ENCODE measurements at regions of chr14 and their contacts with region 1.

Region 1: GRCh38 chr14:37709419-37710195 is 114.2 kb downstream of the TTC6 start:
- DNase-seq: no peak
- H3K4me3 ChIP-seq: no peak overlapping the region
- H3K27ac ChIP-seq: no peak overlapping the region
- H3K4me1 ChIP-seq: no peaks in the 10 kb centered on the region
- H3K27me3 ChIP-seq: no peaks in the 10 kb centered on the region
- CTCF ChIP-seq: peak in 2 of 3 experiments; percentile 30 to 33; a peak in 2 of 4 replicates
- EP300 ChIP-seq: no peak
- POLR2A ChIP-seq: no peak
- RAD21 ChIP-seq: peak; percentile 62 to 74

Region 2: GRCh38 chr14:37428946-37429345 is 280.7 kb before region 1 on chr14:
- CTCF ChIA-PET with region 1: no interaction called
- POLR2A ChIA-PET with region 1: no interaction called
- DNase-seq: no peak
- H3K4me3 ChIP-seq: no peak overlapping the region
- H3K27ac ChIP-seq: no peak overlapping the region
- H3K4me1 ChIP-seq: peaks cover 0 to 4% (median 0%) of the 10 kb centered on the region in 4 experiments; a peak in 1 of 7 replicates
- H3K27me3 ChIP-seq: no peaks in the 10 kb centered on the region
- CTCF ChIP-seq: no peak
- EP300 ChIP-seq: no peak
- POLR2A ChIP-seq: no peak
- RAD21 ChIP-seq: no peak

Region 3: GRCh38 chr14:37673439-37673838 is 36.2 kb before region 1 on chr14:
- CTCF ChIA-PET with region 1: no interaction called
- POLR2A ChIA-PET with region 1: no interaction called
- DNase-seq: no peak
- H3K4me3 ChIP-seq: no peak overlapping the region
- H3K27ac ChIP-seq: no peak overlapping the region
- H3K4me1 ChIP-seq: peaks cover 0 to 4% (median 0%) of the 10 kb centered on the region in 4 experiments; a peak in 1 of 7 replicates
- H3K27me3 ChIP-seq: no peaks in the 10 kb centered on the region
- CTCF ChIP-seq: no peak
- EP300 ChIP-seq: no peak
- POLR2A ChIP-seq: no peak
- RAD21 ChIP-seq: no peak

Region 4: DNA sequence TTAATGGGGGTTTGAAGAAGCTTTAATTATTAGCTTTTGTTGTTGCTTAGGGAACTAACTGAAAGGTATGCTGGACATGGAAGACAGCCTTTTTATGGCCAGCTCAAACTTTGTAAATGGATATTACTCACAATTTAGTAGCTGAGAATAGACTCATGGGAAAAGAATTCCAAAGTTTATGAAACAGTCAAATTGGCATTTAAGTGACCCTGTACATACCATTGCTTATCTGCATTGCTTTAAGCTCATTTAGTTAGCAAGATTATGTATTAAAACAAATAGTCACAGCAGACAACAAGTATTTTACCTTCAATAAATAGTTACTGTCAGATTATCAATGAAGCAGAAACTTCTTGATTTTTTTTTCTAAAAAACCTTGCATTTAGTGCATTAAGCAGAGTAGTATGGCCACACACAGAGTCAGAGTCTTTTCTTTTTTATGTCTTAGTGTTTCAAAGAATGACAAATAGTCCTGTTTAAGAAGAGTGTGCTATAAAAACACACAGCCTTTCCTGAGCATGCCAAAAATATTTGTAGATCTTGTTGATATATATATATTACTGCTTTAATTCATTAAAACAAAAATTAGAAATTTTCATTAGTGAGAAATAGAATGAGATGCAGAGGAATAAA is 12.0 kb before region 1 on chr14:
- CTCF ChIA-PET with region 1: interaction called, 16 read pairs
- POLR2A ChIA-PET with region 1: no interaction called
- DNase-seq: no peak
- H3K4me3 ChIP-seq: no peak overlapping the region
- H3K27ac ChIP-seq: no peak overlapping the region
- H3K4me1 ChIP-seq: no peaks in the 10 kb centered on the region
- H3K27me3 ChIP-seq: no peaks in the 10 kb centered on the region
- CTCF ChIP-seq: no peak
- EP300 ChIP-seq: no peak
- POLR2A ChIP-seq: no peak
- RAD21 ChIP-seq: no peak

Region 5: GRCh38 chr14:37721976-37722659 is 12.5 kb after region 1 on chr14:
- CTCF ChIA-PET with region 1: interaction called, 17 read pairs
- POLR2A ChIA-PET with region 1: no interaction called
- DNase-seq: no peak
- H3K4me3 ChIP-seq: no peak overlapping the region
- H3K27ac ChIP-seq: no peak overlapping the region
- H3K4me1 ChIP-seq: no peaks in the 10 kb centered on the region
- H3K27me3 ChIP-seq: no peaks in the 10 kb centered on the region
- CTCF ChIP-seq: no peak
- EP300 ChIP-seq: no peak
- POLR2A ChIP-seq: no peak
- RAD21 ChIP-seq: no peak

Region 6: DNA sequence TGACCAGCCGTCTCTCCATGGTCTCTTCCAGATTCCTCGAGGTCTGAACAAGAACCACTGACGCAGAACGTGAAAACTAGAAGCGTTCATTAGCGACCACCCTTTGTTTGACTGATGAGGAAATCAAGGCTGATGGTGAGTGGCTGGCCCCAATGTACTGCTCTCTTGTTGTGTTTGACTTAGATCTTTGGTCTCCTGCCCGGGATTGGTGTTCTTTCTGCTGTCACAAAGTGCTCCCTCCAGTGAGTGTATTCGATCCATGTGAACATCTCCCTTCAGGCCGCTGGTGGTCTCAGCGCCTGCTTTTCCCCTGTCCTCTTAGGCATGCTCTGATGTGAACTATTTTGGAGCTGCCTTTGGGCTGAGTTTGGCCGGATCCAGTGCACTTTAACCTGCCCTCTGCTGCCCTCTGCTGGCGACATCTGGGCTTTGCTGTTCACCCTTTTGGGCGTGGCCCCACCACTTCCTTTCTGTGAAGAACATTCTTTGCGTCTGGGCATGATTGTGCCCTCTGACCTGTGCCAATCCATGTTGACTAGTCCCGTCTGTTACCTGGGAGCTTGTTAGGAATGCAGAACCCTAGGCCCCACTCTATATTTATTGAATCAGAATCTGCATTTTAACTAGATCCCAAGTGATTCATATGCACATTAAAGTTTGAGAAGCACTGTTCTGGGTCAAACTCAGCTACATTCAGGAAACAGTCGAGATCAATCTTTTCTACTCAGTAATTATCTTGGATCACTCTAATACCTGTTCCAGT is 165.0 kb after region 1 on chr14:
- CTCF ChIA-PET with region 1: interaction called, 53 read pairs
- POLR2A ChIA-PET with region 1: interaction called, 5 read pairs
- DNase-seq: peak; percentile 71 to 99
- H3K4me3 ChIP-seq: no peak overlapping the region
- H3K27ac ChIP-seq: no peak overlapping the region
- H3K4me1 ChIP-seq: peaks cover 0 to 7% (median 3%) of the 10 kb centered on the region in 4 experiments; a peak in 5 of 7 replicates
- H3K27me3 ChIP-seq: no peaks in the 10 kb centered on the region
- CTCF ChIP-seq: peak; percentile 86 to 98 (median 92)
- EP300 ChIP-seq: no peak
- POLR2A ChIP-seq: no peak
- RAD21 ChIP-seq: peak; percentile 98

Region 7: GRCh38 chr14:37890095-37890494 is 180.5 kb after region 1 on chr14:
- CTCF ChIA-PET with region 1: interaction called, 11 read pairs
- POLR2A ChIA-PET with region 1: no interaction called
- DNase-seq: no peak
- H3K4me3 ChIP-seq: no peak overlapping the region
- H3K27ac ChIP-seq: no peak overlapping the region
- H3K4me1 ChIP-seq: peaks cover 0 to 9% (median 3%) of the 10 kb centered on the region in 4 experiments; a peak in 2 of 7 replicates
- H3K27me3 ChIP-seq: no peaks in the 10 kb centered on the region; a peak in 1 of 7 replicates
- CTCF ChIP-seq: peak in 1 of 3 experiments; percentile 4; a peak in 1 of 4 replicates
- EP300 ChIP-seq: no peak
- POLR2A ChIP-seq: no peak
- RAD21 ChIP-seq: no peak

Measured in H1 (cell line).